Activated naive CD4-positive, alpha-beta T cell treated with anti-CD3 and anti-CD28 coated beads for 36 hours (primary cell): ENCODE measurements at regions of chr1 and their contacts with region 1.

Region 1: GRCh38 chr1:151156515-151156819 is at the start of gene TNFAIP8L2:
- DNase-seq: peak; percentile 93
- H3K4me3 Mint-ChIP-seq: peak within 1 kb of the TSS; percentile 97
- H3K27ac Mint-ChIP-seq: peak within 1 kb of the TSS; percentile 98
- H3K4me1 Mint-ChIP-seq: peaks cover 40% of the 10 kb centered on the region
- H3K27me3 Mint-ChIP-seq: no peaks in the 10 kb centered on the region
- total RNA-seq, gene TNFAIP8L2: 9.6 to 10.5 TPM

Region 2: DNA sequence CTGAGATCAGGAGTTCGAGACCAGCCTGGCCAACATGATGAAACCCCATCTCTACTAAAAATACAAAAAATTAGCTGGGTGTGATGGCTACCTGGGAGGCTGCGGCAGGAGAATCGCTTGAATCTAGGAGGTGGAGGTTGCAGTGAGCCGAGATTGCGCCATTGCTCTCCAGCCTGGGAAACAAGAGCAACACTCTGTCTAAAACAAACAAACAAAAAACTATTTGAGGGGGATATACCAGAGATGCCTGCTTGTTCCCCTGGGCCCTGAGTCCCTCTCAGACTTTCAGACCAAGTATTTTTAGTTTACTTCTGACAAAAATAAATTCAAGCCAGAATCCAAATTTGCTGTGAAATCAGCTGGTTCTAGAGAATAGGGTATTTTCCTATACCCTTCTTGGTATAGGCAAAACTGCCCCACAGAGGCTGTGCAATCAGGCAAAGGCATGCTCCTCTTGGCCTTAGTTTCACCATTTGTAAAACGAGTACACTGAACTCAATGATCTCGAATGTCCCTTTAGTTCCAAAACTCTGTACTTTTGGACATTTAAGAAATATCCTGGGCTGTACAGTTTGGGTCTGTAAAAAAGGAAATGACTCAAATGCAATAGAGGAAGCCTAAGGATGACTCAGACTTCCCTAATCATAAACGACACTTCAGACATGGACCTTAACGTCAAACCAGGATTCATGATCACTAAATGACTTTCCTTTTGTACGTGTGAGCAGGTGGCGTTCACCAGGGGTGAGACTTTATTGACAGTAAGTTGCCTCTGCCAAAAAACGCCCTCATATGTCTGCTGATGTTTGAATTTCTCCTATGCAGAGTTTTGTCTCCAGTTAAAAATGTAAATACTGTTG is 543.2 kb before region 1 on chr1:
- CTCF ChIA-PET with region 1: no interaction called
- intact Hi-C with region 1: loop called (anchors 5 kb)
- DNase-seq: peak; percentile 81
- H3K4me3 Mint-ChIP-seq: peak overlapping the region; percentile 41
- H3K27ac Mint-ChIP-seq: peak overlapping the region; percentile 93
- H3K4me1 Mint-ChIP-seq: peaks cover 64% of the 10 kb centered on the region
- H3K27me3 Mint-ChIP-seq: no peaks in the 10 kb centered on the region

Region 3: GRCh38 chr1:151024540-151025146 is 131.8 kb before region 1 on chr1:
- CTCF ChIA-PET with region 1: interaction called, 30 read pairs
- intact Hi-C with region 1: loop called (anchors 1 kb)
- DNase-seq: peak; percentile 91
- H3K4me3 Mint-ChIP-seq: peak overlapping the region; percentile 36
- H3K27ac Mint-ChIP-seq: no peak overlapping the region
- H3K4me1 Mint-ChIP-seq: peaks cover 6% of the 10 kb centered on the region
- H3K27me3 Mint-ChIP-seq: no peaks in the 10 kb centered on the region

Region 4: DNA sequence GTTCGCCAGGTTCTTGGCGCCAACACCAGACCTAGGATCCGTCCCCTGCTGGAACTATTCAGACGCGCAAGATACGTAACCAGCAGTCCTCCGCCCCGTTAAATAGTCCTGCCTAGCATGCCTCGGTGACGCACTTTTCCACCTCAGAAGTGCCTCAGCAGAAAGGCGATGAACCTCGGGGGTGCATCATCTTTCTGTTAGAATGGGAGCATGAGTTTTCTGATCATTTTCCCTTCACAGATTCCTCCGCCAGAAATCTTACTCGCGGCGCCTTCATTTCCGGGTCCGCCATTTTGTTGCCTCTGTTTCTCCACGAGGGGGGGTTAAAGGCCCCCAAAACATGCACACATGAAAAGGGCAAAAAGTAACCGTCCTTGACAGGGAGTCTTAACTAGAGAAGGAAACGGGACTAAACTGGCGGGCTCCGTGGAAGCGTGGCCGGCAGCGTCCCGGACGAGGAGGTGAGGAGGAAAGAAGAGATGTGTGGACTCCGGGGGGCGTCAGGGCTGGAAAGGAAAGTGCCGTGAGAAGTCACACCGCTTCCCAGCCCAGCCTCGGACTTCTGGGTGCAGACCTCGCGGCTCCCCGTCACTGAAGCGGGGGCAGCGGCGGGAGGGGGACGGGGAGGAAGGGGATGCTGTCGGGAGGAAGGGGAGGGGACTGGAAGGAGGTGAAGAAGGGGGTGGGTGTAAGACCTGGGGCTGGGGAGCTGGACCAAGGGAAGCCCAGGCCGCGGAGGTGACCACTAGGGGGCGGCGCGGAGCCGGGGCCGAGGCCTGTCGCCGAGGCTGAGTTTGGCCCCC is 85.8 kb before region 1 on chr1 and contains the start of gene GABPB2:
- CTCF ChIA-PET with region 1: interaction called, 4 read pairs
- intact Hi-C with region 1: loop called (anchors 1 kb)
- DNase-seq: peak; percentile 92
- H3K4me3 Mint-ChIP-seq: peak within 1 kb of the TSS; percentile 99
- H3K27ac Mint-ChIP-seq: peak within 1 kb of the TSS; percentile 100
- H3K4me1 Mint-ChIP-seq: peaks cover 26% of the 10 kb centered on the region
- H3K27me3 Mint-ChIP-seq: no peaks in the 10 kb centered on the region
- total RNA-seq, gene GABPB2: 16.1 to 16.2 TPM

Region 5: GRCh38 chr1:151130987-151131586 is 25.4 kb before region 1 on chr1:
- CTCF ChIA-PET with region 1: interaction called, 11 read pairs
- intact Hi-C with region 1: loop called (anchors 1 kb)
- DNase-seq: peak; percentile 93
- H3K4me3 Mint-ChIP-seq: peak overlapping the region; percentile 75
- H3K27ac Mint-ChIP-seq: peak overlapping the region; percentile 70
- H3K4me1 Mint-ChIP-seq: peaks cover 8% of the 10 kb centered on the region
- H3K27me3 Mint-ChIP-seq: no peaks in the 10 kb centered on the region